SK-N-SH (cell line): ENCODE measurements at regions of chr6 and their contacts with region 1.

Region 1: GRCh38 chr6:161498359-161498758 is 224.5 kb upstream of the AGPAT4 start:
- DNase-seq: peak; percentile 41
- H3K4me3 ChIP-seq: no peak overlapping the region
- H3K27ac ChIP-seq: no peak overlapping the region
- H3K4me1 ChIP-seq: no peaks in the 10 kb centered on the region; a peak in 1 of 4 replicates
- H3K27me3 ChIP-seq: no peaks in the 10 kb centered on the region
- CTCF ChIP-seq: peak; percentile 61
- EP300 ChIP-seq: no peak
- RAD21 ChIP-seq: peak; percentile 69

Region 2: GRCh38 chr6:161393839-161394364 is 104.5 kb before region 1 on chr6:
- CTCF ChIA-PET with region 1: interaction called, 12 read pairs
- POLR2A ChIA-PET with region 1: no interaction called
- DNase-seq: peak; percentile 66
- H3K4me3 ChIP-seq: peak overlapping the region in 1 of 2 experiments; percentile 16; a peak in 1 of 4 replicates
- H3K27ac ChIP-seq: no peak overlapping the region
- H3K4me1 ChIP-seq: peaks cover 0 to 14% of the 10 kb centered on the region in 2 experiments; a peak in 1 of 4 replicates
- H3K27me3 ChIP-seq: 0 out of 2 replicates have a peak, but pooled peaks cover 4% of the 10 kb centered on the region
- CTCF ChIP-seq: peak; percentile 78
- EP300 ChIP-seq: no peak
- RAD21 ChIP-seq: peak; percentile 94